ENCODE measurements at regions of chr16 and their contacts with region 1.

Region 1: GRCh38 chr16:86016201-86016871 is 117.4 kb downstream of the IRF8 start:
- DNase-seq: peak; percentile 17 to 55
- H3K4me3 ChIP-seq: no peak overlapping the region
- H3K27ac ChIP-seq: no peak overlapping the region
- H3K4me1 ChIP-seq: no peaks in the 10 kb centered on the region
- H3K27me3 ChIP-seq: no peaks in the 10 kb centered on the region; a peak in 3 of 7 replicates
- CTCF ChIP-seq: peak; percentile 37 to 86 (median 80)
- EP300 ChIP-seq: no peak
- POLR2A ChIP-seq: no peak
- RAD21 ChIP-seq: peak; percentile 94 to 96

Region 2: GRCh38 chr16:85986931-85987749 is 29.2 kb before region 1 on chr16:
- CTCF ChIA-PET with region 1: interaction called, 18 read pairs
- POLR2A ChIA-PET with region 1: no interaction called
- DNase-seq: peak in 1 of 2 experiments; percentile 72
- H3K4me3 ChIP-seq: no peak overlapping the region
- H3K27ac ChIP-seq: no peak overlapping the region
- H3K4me1 ChIP-seq: no peaks in the 10 kb centered on the region; a peak in 1 of 7 replicates
- H3K27me3 ChIP-seq: no peaks in the 10 kb centered on the region
- CTCF ChIP-seq: peak in 2 of 3 experiments; percentile 37 to 50; a peak in 3 of 4 replicates
- EP300 ChIP-seq: no peak
- POLR2A ChIP-seq: no peak
- RAD21 ChIP-seq: peak; percentile 64 to 67

Region 3: GRCh38 chr16:85995541-85996423 is 20.6 kb before region 1 on chr16:
- CTCF ChIA-PET with region 1: interaction called, 18 read pairs
- POLR2A ChIA-PET with region 1: no interaction called
- DNase-seq: no peak
- H3K4me3 ChIP-seq: no peak overlapping the region
- H3K27ac ChIP-seq: no peak overlapping the region
- H3K4me1 ChIP-seq: no peaks in the 10 kb centered on the region; a peak in 1 of 7 replicates
- H3K27me3 ChIP-seq: no peaks in the 10 kb centered on the region
- CTCF ChIP-seq: no peak
- EP300 ChIP-seq: no peak
- POLR2A ChIP-seq: no peak
- RAD21 ChIP-seq: no peak

Region 4: DNA sequence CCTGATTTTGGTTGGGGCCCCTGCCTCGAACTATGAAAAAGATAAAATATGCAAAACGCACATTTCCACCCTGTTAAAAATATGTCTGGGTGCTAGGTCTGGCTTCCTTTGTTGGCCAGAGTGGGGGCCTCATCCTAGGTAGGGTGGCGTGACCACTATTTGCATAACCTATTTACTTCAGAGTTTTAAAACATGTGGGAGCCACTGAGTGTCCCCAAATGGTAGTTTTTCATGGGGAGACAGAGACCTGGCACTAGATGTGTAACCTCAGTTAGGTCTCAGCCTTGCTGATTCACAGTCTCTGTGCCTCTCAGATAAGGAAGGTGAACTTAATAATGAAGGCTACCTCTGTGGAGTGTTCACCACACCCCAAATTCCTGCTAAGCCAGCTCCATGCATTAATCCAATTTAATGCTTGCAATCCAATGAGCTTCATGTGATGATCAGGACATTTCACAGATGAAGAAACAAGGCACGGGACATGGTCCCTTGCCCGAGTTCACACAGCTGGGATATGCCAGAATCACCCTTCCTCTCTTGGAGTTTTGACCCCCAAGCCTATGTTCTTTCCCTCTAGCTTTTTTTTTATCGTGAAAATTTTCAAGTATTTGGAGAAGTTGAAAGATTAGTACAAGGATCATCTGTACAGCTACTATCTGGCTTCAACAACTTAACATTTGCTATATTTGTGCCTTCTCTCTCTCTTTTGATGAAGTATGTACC is 14.0 kb before region 1 on chr16:
- CTCF ChIA-PET with region 1: interaction called, 10 read pairs
- POLR2A ChIA-PET with region 1: no interaction called
- DNase-seq: no peak
- H3K4me3 ChIP-seq: no peak overlapping the region
- H3K27ac ChIP-seq: no peak overlapping the region
- H3K4me1 ChIP-seq: no peaks in the 10 kb centered on the region
- H3K27me3 ChIP-seq: no peaks in the 10 kb centered on the region
- CTCF ChIP-seq: no peak
- EP300 ChIP-seq: no peak
- POLR2A ChIP-seq: no peak
- RAD21 ChIP-seq: no peak

Region 5: GRCh38 chr16:86029131-86029741 is 12.9 kb after region 1 on chr16:
- CTCF ChIA-PET with region 1: interaction called, 24 read pairs
- POLR2A ChIA-PET with region 1: no interaction called
- DNase-seq: no peak
- H3K4me3 ChIP-seq: no peak overlapping the region
- H3K27ac ChIP-seq: no peak overlapping the region; the same call in 1 of the 2 replicates
- H3K4me1 ChIP-seq: peaks cover 0 to 13% (median 7%) of the 10 kb centered on the region in 4 experiments; a peak in 6 of 7 replicates
- H3K27me3 ChIP-seq: peaks cover 0 to 3% (median 0%) of the 10 kb centered on the region in 4 experiments; a peak in 2 of 7 replicates
- CTCF ChIP-seq: no peak
- EP300 ChIP-seq: no peak
- POLR2A ChIP-seq: no peak
- RAD21 ChIP-seq: no peak

Region 6: GRCh38 chr16:86044241-86044671 is 27.9 kb after region 1 on chr16:
- CTCF ChIA-PET with region 1: interaction called, 17 read pairs
- POLR2A ChIA-PET with region 1: no interaction called
- DNase-seq: peak; percentile 46 to 93
- H3K4me3 ChIP-seq: no peak overlapping the region
- H3K27ac ChIP-seq: no peak overlapping the region
- H3K4me1 ChIP-seq: peaks cover 0 to 1% (median 0%) of the 10 kb centered on the region in 4 experiments; a peak in 1 of 7 replicates
- H3K27me3 ChIP-seq: no peaks in the 10 kb centered on the region; a peak in 1 of 7 replicates
- CTCF ChIP-seq: peak; percentile 87 to 97 (median 94)
- EP300 ChIP-seq: no peak
- POLR2A ChIP-seq: no peak
- RAD21 ChIP-seq: peak; percentile 71 to 78

Region 7: GRCh38 chr16:86059253-86060171 is 43.2 kb after region 1 on chr16:
- CTCF ChIA-PET with region 1: no interaction called
- POLR2A ChIA-PET with region 1: no interaction called
- DNase-seq: no peak
- H3K4me3 ChIP-seq: no peak overlapping the region
- H3K27ac ChIP-seq: no peak overlapping the region
- H3K4me1 ChIP-seq: no peaks in the 10 kb centered on the region
- H3K27me3 ChIP-seq: peaks cover 0 to 3% (median 0%) of the 10 kb centered on the region in 4 experiments; a peak in 1 of 7 replicates
- CTCF ChIP-seq: no peak
- EP300 ChIP-seq: no peak
- POLR2A ChIP-seq: no peak
- RAD21 ChIP-seq: no peak